Activated T-helper 1 cell treated with anti-CD3 and anti-CD28 coated beads, Interleukin-12 subunit alpha, Interleukin-12 subunit beta, Interleukin-2, Interleukin-4 antibody, amounts not matched to agents 30 ng/mL and 10 ng/mL and 1 ng/mL, durations not matched to agents 14 hours and 24 hours and 36 hours (primary cell): ENCODE measurements at regions of chrX and their contacts with region 1.

Region 1: GRCh38 chrX:56729152-56729850 is at the start of gene NBDY:
- DNase-seq: peak; percentile 2
- H3K4me3 Mint-ChIP-seq: peak within 1 kb of the TSS; percentile 92
- H3K27ac Mint-ChIP-seq: peak within 1 kb of the TSS; percentile 86
- H3K4me1 Mint-ChIP-seq: peaks cover 21% of the 10 kb centered on the region
- H3K27me3 Mint-ChIP-seq: no peaks in the 10 kb centered on the region
- total RNA-seq, gene NBDY: 29.3 and 36.7 TPM in 2 replicates

Region 2: GRCh38 chrX:55907968-55908607 is 821.2 kb before region 1 on chrX:
- intact Hi-C with region 1: loop called (anchors 5 kb)
- DNase-seq: peak; percentile 33
- H3K4me3 Mint-ChIP-seq: peak overlapping the region; percentile 85
- H3K27ac Mint-ChIP-seq: peak overlapping the region; percentile 92
- H3K4me1 Mint-ChIP-seq: peaks cover 31% of the 10 kb centered on the region
- H3K27me3 Mint-ChIP-seq: no peaks in the 10 kb centered on the region

Region 3: GRCh38 chrX:56281789-56282188 is 447.5 kb before region 1 on chrX:
- intact Hi-C with region 1: loop called (anchors 1 kb)
- DNase-seq: peak; percentile 1
- H3K4me3 Mint-ChIP-seq: no peak overlapping the region
- H3K27ac Mint-ChIP-seq: no peak overlapping the region
- H3K4me1 Mint-ChIP-seq: peaks cover 11% of the 10 kb centered on the region
- H3K27me3 Mint-ChIP-seq: no peaks in the 10 kb centered on the region

Region 4: GRCh38 chrX:56382278-56382677 is 347.0 kb before region 1 on chrX:
- intact Hi-C with region 1: loop called (anchors 1 kb)
- DNase-seq: peak; percentile 8
- H3K4me3 Mint-ChIP-seq: peak overlapping the region; percentile 58
- H3K27ac Mint-ChIP-seq: peak overlapping the region; percentile 88
- H3K4me1 Mint-ChIP-seq: peaks cover 38% of the 10 kb centered on the region
- H3K27me3 Mint-ChIP-seq: no peaks in the 10 kb centered on the region

Region 5: DNA sequence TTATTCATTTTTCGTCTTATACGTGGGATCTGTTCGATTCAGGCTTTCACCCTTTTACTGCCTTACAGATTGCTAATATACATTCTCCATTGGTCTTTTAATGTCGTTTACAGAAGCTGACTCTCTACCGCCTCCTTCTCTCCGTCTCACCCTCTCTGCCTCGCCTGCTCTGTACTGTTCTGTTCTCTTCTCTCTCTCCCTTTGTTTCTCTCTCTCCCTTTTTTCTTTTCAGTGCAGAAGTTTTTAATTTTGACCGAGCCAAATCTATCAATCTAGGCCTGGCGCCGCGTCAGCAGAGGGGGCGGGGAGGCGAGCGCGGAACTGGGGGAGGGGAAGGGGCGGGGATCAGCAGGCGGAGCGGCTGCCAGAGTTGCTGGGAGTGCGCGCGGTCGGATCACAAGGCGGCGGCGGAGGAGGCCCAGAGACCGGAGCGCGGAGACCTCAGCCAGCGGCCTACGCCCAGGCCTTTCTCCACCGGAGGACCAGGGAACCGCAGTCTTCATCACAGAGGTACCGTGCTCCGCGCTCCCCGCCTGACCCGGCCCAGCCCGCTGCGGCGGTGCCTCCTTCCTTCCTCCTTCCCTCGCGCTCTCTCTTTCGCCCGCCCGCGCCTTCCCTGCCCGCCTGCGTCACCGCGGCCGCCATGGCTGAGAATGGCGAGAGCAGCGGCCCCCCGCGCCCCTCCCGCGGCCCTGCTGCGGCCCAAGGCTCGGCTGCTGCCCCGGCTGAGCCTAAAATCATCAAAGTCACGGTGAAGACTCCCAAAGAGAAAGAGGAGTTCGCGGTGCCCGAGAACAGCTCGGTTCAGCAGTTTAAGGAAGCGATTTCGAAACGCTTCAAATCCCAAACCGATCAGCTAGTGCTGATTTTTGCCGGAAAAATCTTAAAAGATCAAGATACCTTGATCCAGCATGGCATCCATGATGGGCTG is 165.8 kb before region 1 on chrX and contains the start of gene UBQLN2:
- intact Hi-C with region 1: loop called (anchors 1 kb)
- DNase-seq: peak; percentile 67
- H3K4me3 Mint-ChIP-seq: peak within 1 kb of the TSS; percentile 88
- H3K27ac Mint-ChIP-seq: peak within 1 kb of the TSS; percentile 97
- H3K4me1 Mint-ChIP-seq: peaks cover 12% of the 10 kb centered on the region
- H3K27me3 Mint-ChIP-seq: no peaks in the 10 kb centered on the region
- total RNA-seq, gene UBQLN2: 38.3 and 41.3 TPM in 2 replicates

Region 6: DNA sequence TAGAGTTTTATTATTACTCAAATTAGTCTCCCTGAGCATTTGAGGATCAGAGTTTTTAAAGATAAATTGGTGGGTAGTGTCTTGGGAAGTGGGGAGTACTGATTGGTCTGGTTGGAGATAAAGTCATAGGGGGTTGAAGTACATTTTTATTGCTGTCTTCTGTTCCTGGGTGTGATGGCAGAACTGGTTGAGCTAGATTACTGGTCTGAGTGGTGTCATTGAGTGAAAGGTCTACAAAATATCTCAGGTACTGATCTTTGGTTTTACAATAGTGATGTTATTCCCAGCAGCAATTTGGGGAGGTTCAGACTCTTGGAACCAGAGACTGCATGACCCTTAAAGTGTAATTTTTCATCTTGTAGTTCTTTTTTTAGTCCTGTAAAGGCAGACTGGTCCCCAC is 147.0 kb after region 1 on chrX:
- intact Hi-C with region 1: no loop called
- DNase-seq: no peak
- H3K4me3 Mint-ChIP-seq: no peak overlapping the region
- H3K27ac Mint-ChIP-seq: no peak overlapping the region
- H3K4me1 Mint-ChIP-seq: no peaks in the 10 kb centered on the region
- H3K27me3 Mint-ChIP-seq: peaks cover 2% of the 10 kb centered on the region